ENCODE measurements at regions of chr6 and their contacts with region 1.

Region 1: DNA sequence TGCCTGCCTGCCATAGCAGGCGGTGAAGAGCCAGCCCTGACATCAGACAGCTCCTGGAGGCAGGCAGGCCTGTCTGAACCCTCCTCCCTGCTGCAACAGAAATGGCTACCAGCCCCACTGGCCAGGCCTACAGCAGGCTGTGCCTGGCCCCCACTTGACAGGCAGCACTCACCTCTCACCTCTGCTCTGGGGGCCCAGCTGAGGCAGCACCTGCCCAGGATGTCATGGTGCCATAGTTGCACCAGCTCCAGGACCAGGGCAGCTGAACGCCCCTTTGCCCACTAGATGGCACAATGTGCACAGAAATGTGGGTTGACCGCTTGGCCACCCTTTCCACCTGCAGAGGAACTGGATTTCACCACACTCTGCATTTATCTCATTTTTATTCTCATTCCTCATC is 30.6 kb downstream of the MRPL14 start:
- DNase-seq: peak; percentile 67 to 91 (median 81)

Region 2: GRCh38 chr6:43774776-43775534 is 321.7 kb before region 1 on chr6:
- intact Hi-C with region 1: no loop called
- DNase-seq: peak; percentile 30 to 84 (median 66)

Region 3: DNA sequence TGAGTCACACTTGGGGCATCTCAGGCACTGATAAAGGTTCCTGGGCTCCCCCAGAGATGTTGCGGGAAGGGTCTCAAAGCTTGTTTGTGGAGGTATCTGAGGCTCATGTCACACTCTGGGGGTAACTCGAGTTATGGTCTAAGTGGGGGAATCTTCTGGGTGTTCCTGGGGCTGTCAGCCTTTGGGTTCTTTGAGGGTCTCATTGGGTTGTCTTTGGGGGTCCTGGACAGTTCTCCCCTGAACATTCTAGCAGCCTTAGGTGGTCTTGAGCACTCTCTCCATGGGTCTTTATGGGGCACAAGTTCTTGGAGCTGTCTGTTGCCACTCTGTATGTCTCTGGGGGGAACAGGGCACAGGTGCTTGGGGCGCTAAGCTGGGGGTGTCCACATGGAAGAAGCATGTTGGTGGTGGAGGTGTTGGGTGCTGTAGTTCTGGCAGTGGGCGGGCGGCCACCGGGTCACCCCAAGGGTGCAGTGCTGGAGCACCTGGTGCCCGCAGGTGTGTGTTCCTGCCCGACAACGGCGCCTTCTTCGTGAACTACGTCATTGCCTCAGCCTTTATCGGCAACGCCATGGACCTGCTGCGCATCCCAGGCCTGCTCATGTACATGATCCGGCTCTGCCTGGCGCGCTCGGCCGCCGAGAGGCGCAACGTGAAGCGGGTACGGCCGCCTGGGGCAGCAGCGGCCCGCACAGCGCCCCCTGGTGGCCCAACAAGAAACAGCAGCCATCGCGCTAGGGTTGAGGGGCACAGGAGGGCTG is 54.9 kb after region 1 on chr6:
- intact Hi-C with region 1: loop called (anchors 2 kb)
- DNase-seq: peak in 41 of 42 donors; percentile 50 to 90 (median 76)

Measured in head of caudate nucleus (tissue), 42 donors.